ENCODE measurements at regions of chr15 and their contacts with region 1.

Region 1: GRCh38 chr15:64093627-64094417 is at the start of gene CIAO2A:
- DNase-seq: peak; percentile 95
- ATAC-seq: peak; percentile 93
- total RNA-seq, gene CIAO2A: 26.3 TPM

Region 2: GRCh38 chr15:64153480-64154367 is 59.9 kb after region 1 on chr15:
- intact Hi-C with region 1: loop called (anchors 10 kb)
- DNase-seq: peak; percentile 95
- ATAC-seq: peak; percentile 93